PC-9 (cell line): ENCODE measurements at regions of chr10 and their contacts with region 1.

Region 1: DNA sequence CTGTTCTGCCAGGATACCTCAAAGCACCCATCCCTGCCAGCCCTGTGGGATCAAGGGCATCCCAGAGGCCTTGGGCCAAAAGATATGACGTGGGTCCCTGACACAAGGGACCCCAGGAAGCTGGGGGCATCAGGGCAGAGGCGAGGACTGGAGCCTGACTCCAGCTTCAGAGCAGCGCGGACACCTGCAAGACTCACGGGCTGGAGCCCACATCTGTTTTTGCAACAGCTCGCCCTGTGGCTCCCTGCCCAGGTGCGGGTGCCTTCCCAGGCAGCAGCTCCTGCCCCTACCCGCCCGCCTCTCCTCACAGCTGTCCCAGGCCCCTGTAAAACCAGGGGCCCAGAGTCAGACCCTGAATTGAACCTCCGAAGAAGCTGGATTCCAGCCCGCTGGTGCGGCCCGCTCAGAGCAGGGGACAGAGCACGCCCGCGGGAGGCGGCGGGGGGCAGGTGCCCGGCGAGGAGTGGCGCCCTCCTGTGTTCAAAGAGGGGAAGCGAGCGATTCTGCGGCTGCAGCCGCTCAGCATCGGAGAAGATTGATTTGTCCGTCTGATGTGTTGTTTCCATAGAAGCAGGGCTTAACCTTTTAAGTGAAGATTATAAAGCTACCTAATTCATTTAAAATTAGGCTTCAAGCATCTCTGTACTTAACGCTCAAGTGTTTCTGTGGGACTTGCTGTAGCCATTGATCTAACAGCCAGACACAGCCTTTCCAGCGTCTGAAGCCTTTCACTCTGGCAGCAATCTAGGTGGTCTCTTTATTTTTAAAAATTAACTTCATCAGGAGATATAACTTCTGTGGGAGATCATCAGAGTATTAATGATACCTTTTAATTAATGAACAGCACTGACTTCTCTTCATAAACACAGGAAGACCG is 88.4 kb downstream of the BEND7 start:
- DNase-seq: peak in 1 of 2 experiments; percentile 48
- H3K4me3 ChIP-seq: no peak overlapping the region
- H3K27ac ChIP-seq: no peak overlapping the region
- H3K4me1 ChIP-seq: no peaks in the 10 kb centered on the region
- H3K27me3 ChIP-seq: peaks cover 90% of the 10 kb centered on the region
- CTCF ChIP-seq: peak; percentile 69

Region 2: GRCh38 chr10:13160934-13161856 is 279.2 kb before region 1 on chr10 and contains the start of gene MCM10:
- CTCF ChIA-PET with region 1: interaction called, 7 read pairs
- POLR2A ChIA-PET with region 1: no interaction called
- intact Hi-C with region 1: loop called (anchors 5 kb)
- DNase-seq: peak; percentile 95 to 97
- H3K4me3 ChIP-seq: peak within 1 kb of the TSS; percentile 77
- H3K27ac ChIP-seq: no peak within 1 kb of the TSS
- H3K4me1 ChIP-seq: peaks cover 14% of the 10 kb centered on the region; the same call in 1 of the 2 replicates
- H3K27me3 ChIP-seq: no peaks in the 10 kb centered on the region
- CTCF ChIP-seq: peak; percentile 80
- total RNA-seq, gene MCM10: 20.9 and 24.5 TPM in 2 replicates

Region 3: DNA sequence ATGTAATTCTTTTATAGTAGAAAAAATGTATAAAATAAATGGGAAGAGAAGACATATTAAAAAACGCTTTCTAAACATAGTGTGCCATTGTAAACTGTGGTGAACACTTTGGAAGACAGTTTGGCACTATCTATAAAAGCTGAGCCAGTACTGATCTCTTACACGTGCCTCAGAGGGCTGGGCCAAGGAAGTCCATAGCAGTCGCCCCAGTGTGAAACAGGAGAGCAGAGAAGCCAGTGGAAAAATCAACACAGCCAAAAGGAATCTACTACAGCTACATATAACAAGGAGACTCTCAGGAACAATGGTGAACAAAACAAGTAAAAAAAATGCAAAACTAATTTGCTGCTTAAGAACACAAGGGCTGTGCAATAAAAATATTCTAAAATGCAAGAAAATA is 112.9 kb before region 1 on chr10:
- CTCF ChIA-PET with region 1: interaction called, 14 read pairs
- POLR2A ChIA-PET with region 1: no interaction called
- intact Hi-C with region 1: no loop called
- DNase-seq: no peak
- H3K4me3 ChIP-seq: no peak overlapping the region
- H3K27ac ChIP-seq: no peak overlapping the region
- H3K4me1 ChIP-seq: no peaks in the 10 kb centered on the region
- H3K27me3 ChIP-seq: no peaks in the 10 kb centered on the region
- CTCF ChIP-seq: no peak

Region 4: DNA sequence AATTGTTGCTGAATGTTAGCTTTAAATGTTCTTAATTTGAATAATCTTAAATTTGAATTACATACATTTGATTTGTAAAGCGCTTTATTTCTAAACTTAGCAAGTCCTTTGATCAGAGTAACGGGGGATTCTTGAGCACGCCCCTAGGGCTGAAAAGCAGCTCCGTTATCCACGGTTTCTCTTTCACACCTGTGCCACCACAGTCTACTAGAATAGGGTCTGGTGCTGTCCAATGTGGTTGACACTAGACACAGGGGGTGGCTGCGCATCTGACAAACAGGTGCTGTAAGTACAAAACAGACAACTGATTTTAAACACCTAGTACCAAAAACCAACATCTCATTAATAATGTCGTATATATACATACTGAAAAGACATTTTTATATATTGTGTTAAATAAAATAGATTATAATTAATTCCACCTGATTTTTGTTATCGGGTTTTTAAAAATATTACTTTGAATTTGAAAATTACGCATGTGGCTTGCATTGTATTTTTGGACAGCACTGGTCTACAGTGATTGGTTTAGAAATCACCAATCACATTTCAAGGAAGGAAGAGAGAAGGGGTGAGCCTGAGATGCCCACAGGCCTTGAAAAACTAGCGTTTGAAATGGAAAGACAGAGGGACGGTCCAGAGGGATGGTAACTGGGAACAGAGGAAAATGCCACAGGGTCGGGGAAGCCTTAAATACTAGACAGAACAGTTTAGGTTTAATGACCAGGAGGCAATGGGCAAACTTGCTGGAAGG is 99.6 kb before region 1 on chr10:
- CTCF ChIA-PET with region 1: interaction called, 10 read pairs
- POLR2A ChIA-PET with region 1: no interaction called
- intact Hi-C with region 1: no loop called
- DNase-seq: no peak
- H3K4me3 ChIP-seq: no peak overlapping the region
- H3K27ac ChIP-seq: no peak overlapping the region
- H3K4me1 ChIP-seq: 0 out of 2 replicates have a peak, but pooled peaks cover 1% of the 10 kb centered on the region
- H3K27me3 ChIP-seq: no peaks in the 10 kb centered on the region
- CTCF ChIP-seq: no peak

Region 5: DNA sequence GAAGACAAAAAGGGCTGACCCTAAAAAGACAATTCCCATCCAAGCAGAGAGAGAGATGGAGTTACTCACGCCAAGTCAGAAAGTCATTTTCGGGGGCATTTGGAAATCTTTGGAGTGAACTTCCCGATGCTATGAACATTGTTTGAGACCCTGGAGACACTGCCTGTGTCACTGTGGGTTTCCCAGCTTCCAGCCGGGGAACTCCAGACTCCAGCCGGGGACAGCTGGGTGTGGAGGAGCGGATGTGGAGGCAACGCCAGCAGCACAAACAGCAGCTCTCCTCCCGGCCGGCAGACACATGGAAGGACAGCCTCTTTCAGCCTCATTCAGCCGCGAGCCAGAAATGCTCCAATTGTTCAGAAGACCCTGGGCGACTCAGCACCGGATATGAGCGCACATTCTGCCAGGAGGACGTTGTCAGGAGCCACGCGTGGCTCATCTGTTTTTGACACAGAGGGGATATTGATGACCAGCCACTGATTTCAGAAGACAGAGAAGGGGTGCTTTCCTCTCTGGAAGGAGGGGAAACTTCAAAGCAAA is 243.9 kb after region 1 on chr10:
- CTCF ChIA-PET with region 1: no interaction called
- POLR2A ChIA-PET with region 1: no interaction called
- intact Hi-C with region 1: no loop called
- DNase-seq: no peak
- H3K4me3 ChIP-seq: no peak overlapping the region
- H3K27ac ChIP-seq: no peak overlapping the region
- H3K4me1 ChIP-seq: no peaks in the 10 kb centered on the region
- H3K27me3 ChIP-seq: no peaks in the 10 kb centered on the region
- CTCF ChIP-seq: no peak